ENCODE measurements at regions of chr15 and their contacts with region 1.

Region 1: DNA sequence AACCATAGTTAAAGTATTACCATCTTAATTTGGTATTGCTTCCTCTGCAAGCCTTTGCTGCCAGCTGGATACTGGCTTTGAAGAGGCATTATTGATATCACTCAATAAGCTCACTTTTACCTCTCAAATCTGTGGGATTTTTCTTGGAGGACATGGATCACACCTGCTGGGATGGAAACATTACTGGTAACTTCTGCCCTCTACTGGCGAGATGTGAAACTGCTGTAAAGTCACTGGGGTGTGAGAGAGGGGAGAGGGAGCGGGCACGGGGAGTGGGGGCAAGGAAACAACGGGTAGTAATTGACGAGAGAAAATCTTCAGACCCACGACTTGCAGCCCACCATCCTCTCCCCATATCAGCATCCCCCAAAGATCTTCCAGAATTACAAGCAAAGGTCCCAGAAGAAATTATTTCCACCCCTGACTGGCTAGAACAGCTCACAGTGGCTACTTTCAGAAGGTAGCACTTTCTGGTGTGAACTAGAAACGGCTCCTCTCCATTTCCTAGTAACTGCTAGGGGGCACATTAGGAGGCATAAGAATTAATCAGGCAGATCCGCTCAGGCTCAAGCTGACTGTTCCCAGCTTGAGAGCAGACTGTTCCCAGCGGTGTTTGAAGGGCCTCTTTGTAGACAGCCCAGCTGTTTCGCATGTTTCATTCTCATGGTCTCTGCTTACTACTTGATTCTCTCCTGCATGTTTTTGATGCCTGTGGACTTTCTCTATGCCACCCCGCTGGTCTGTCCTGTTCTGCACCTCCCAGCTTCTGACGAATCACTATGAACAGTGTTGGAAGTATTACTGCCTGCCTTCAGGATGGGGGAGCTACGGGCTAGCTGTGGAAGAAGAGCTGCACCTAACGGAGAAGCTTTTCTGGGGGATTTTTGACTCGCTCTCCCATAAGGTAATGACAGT is 230.4 kb upstream of the CHRM5 start:
- DNase-seq: peak; percentile 45
- ATAC-seq: no peak
- H3K4me3 Mint-ChIP-seq: no peak overlapping the region
- H3K27ac Mint-ChIP-seq: no peak overlapping the region
- H3K4me1 Mint-ChIP-seq: peaks cover 3% of the 10 kb centered on the region
- H3K27me3 Mint-ChIP-seq: peaks cover 1% of the 10 kb centered on the region
- CTCF ChIP-seq: peak; percentile 74

Region 2: GRCh38 chr15:33292717-33293307 is 445.1 kb before region 1 on chr15:
- CTCF ChIA-PET with region 1: interaction called, 13 read pairs
- POLR2A ChIA-PET with region 1: no interaction called
- intact Hi-C with region 1: no loop called
- DNase-seq: peak; percentile 73
- ATAC-seq: peak; percentile 49
- H3K4me3 Mint-ChIP-seq: no peak overlapping the region
- H3K27ac Mint-ChIP-seq: no peak overlapping the region
- H3K4me1 Mint-ChIP-seq: no peaks in the 10 kb centered on the region
- H3K27me3 Mint-ChIP-seq: peaks cover 7% of the 10 kb centered on the region
- CTCF ChIP-seq: peak; percentile 68

Region 3: GRCh38 chr15:33722005-33722672 is 15.8 kb before region 1 on chr15:
- CTCF ChIA-PET with region 1: interaction called, 22 read pairs
- POLR2A ChIA-PET with region 1: no interaction called
- intact Hi-C with region 1: no loop called
- DNase-seq: no peak
- ATAC-seq: no peak
- H3K4me3 Mint-ChIP-seq: no peak overlapping the region
- H3K27ac Mint-ChIP-seq: no peak overlapping the region
- H3K4me1 Mint-ChIP-seq: no peaks in the 10 kb centered on the region
- H3K27me3 Mint-ChIP-seq: peaks cover 3% of the 10 kb centered on the region
- CTCF ChIP-seq: no peak

Region 4: GRCh38 chr15:33865416-33865815 is 127.5 kb after region 1 on chr15:
- CTCF ChIA-PET with region 1: no interaction called
- POLR2A ChIA-PET with region 1: no interaction called
- intact Hi-C with region 1: no loop called
- DNase-seq: no peak
- ATAC-seq: no peak
- H3K4me3 Mint-ChIP-seq: no peak overlapping the region
- H3K27ac Mint-ChIP-seq: no peak overlapping the region
- H3K4me1 Mint-ChIP-seq: peaks cover 3% of the 10 kb centered on the region
- H3K27me3 Mint-ChIP-seq: no peaks in the 10 kb centered on the region
- CTCF ChIP-seq: no peak

Region 5: GRCh38 chr15:33963831-33964664 is 226.1 kb after region 1 on chr15:
- CTCF ChIA-PET with region 1: interaction called, 16 read pairs
- POLR2A ChIA-PET with region 1: no interaction called
- intact Hi-C with region 1: loop called (anchors 10 kb)
- DNase-seq: no peak
- ATAC-seq: no peak
- H3K4me3 Mint-ChIP-seq: no peak overlapping the region
- H3K27ac Mint-ChIP-seq: no peak overlapping the region
- H3K4me1 Mint-ChIP-seq: peaks cover 2% of the 10 kb centered on the region
- H3K27me3 Mint-ChIP-seq: no peaks in the 10 kb centered on the region
- CTCF ChIP-seq: peak; percentile 40